ENCODE measurements at regions of chr3 and their contacts with region 1.

Region 1: GRCh38 chr3:112734718-112735350 is 93.9 kb upstream of the CCDC80 start:
- DNase-seq: peak; percentile 16 to 84 (median 52)
- ATAC-seq: peak; percentile 48 to 71 (median 55)
- H3K4me3 ChIP-seq: no peak overlapping the region
- H3K4me3 Mint-ChIP-seq: peak overlapping the region in 1 of 3 donors; percentile 13
- H3K27ac ChIP-seq: no peak overlapping the region
- H3K27ac Mint-ChIP-seq: peak overlapping the region in 1 of 2 donors; percentile 3
- H3K4me1 ChIP-seq: peaks cover 22 to 34% of the 10 kb centered on the region in 2 experiments
- H3K4me1 Mint-ChIP-seq: peaks cover 41 to 44% (median 44%) of the 10 kb centered on the region in 3 donors
- H3K27me3 ChIP-seq: no peaks in the 10 kb centered on the region
- H3K27me3 Mint-ChIP-seq: no peaks in the 10 kb centered on the region

Region 2: DNA sequence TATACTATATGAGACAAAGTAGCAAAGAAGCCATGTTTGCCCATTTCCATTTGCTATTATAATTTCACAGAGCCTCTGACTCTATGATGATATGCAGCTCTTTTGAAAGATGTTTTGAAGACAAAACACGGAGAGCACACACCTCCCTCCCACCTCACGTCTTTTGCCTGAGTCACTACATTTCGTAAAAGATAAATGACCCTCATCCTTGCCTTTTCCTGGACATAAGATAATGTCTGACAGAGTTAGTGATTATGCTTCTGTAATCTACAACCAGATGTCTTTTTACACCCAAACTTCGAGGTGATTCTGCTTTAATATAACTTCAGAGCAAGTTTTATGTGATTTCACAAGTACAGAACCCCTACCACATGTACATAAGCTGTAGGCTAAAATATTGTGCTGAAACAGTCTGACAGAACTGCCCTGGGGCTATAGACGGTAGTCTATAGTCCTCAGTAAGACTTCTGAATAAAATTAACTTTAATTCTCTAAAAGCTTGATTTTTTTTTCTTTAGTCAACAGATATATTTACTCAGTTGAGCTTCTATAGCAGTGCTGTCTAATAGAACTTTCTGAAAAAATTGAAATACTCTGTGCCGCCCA is 11.9 kb after region 1 on chr3:
- CTCF ChIA-PET with region 1: interaction called, 7 to 10 read pairs
- POLR2A ChIA-PET with region 1: no interaction called
- DNase-seq: no peak
- ATAC-seq: no peak
- H3K4me3 ChIP-seq: no peak overlapping the region
- H3K4me3 Mint-ChIP-seq: no peak overlapping the region
- H3K27ac ChIP-seq: no peak overlapping the region
- H3K27ac Mint-ChIP-seq: peak overlapping the region in 1 of 2 donors; percentile 69
- H3K4me1 ChIP-seq: no peaks in the 10 kb centered on the region
- H3K4me1 Mint-ChIP-seq: peaks cover 6 to 36% (median 12%) of the 10 kb centered on the region in 3 donors
- H3K27me3 ChIP-seq: no peaks in the 10 kb centered on the region
- H3K27me3 Mint-ChIP-seq: no peaks in the 10 kb centered on the region

Region 3: DNA sequence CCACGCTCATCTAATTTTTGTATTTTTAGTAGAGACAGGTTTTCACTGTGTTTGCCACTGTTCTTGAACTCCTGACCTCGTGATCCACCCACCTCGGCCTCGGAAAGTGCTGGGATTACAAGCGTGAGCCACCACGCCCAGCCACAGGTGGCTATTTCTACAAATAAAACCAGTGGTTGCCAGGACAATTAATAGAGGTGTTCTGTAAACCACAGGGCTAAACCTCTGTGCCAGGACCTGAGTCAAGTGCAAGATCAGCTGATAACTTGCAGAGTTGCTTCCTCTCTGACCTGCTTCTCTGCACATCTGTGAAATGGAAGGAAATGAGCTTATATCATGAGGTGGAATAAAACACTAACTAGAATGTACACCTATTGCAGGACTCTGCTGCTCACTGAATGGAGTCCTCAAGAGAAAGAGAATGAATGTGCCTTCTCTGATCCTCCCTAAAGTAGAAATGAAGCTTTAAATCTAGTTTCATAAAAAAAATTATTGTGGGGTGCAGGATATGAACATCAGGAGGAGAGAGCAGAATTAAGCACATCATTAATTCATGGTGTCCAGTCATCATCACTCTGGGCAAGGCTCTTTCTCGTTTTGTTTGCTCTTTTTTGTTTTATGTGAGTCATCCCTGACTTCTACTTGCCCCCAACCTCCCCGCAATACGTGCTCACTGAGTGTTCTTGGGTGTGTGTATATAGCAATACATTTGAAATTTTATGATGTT is 39.2 kb after region 1 on chr3:
- CTCF ChIA-PET with region 1: interaction called, 4 to 11 read pairs
- POLR2A ChIA-PET with region 1: no interaction called
- DNase-seq: peak in 18 of 35 experiments; percentile 1 to 46 (median 7)
- ATAC-seq: peak; percentile 55 to 85 (median 74)
- H3K4me3 ChIP-seq: no peak overlapping the region
- H3K4me3 Mint-ChIP-seq: peak overlapping the region in 2 of 3 donors; percentile 17 to 18
- H3K27ac ChIP-seq: peak overlapping the region; percentile 38
- H3K27ac Mint-ChIP-seq: peak overlapping the region; percentile 59 to 88
- H3K4me1 ChIP-seq: peaks cover 5 to 30% of the 10 kb centered on the region in 2 experiments
- H3K4me1 Mint-ChIP-seq: peaks cover 19 to 62% (median 32%) of the 10 kb centered on the region in 3 donors
- H3K27me3 ChIP-seq: no peaks in the 10 kb centered on the region
- H3K27me3 Mint-ChIP-seq: no peaks in the 10 kb centered on the region

Region 4: DNA sequence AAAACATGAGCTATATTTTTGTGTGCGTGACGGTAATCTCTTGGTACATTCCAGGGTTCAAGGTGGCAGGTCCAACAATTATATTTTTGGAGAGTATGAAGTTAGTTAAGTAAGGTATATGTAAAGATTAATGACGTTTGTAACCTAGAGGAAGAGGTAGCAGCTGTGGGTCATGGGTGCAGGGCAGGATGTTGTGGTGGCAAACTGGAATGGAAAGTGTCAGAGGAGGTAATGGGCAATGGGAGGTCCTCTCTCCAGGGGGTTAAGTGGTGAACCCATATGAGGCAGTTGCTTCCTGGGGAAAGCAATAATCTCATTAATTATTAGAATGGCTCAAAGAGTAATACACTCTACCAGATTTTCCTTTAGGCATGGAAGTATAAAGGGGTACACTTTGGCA is 112.9 kb after region 1 on chr3:
- CTCF ChIA-PET with region 1: no interaction called
- POLR2A ChIA-PET with region 1: no interaction called
- DNase-seq: peak in 28 of 35 experiments; percentile 5 to 48 (median 30)
- ATAC-seq: peak in 3 of 4 experiments; percentile 73 to 84 (median 76)
- H3K4me3 ChIP-seq: no peak overlapping the region
- H3K4me3 Mint-ChIP-seq: peak overlapping the region; percentile 1 to 41 (median 31)
- H3K27ac ChIP-seq: peak overlapping the region; percentile 70
- H3K27ac Mint-ChIP-seq: peak overlapping the region; percentile 62 to 83
- H3K4me1 ChIP-seq: peaks cover 2 to 15% of the 10 kb centered on the region in 2 experiments
- H3K4me1 Mint-ChIP-seq: peaks cover 24 to 32% (median 31%) of the 10 kb centered on the region in 3 donors
- H3K27me3 ChIP-seq: no peaks in the 10 kb centered on the region
- H3K27me3 Mint-ChIP-seq: no peaks in the 10 kb centered on the region

Region 5: GRCh38 chr3:112979240-112979832 is 244.5 kb after region 1 on chr3:
- CTCF ChIA-PET with region 1: interaction called, 21 to 68 read pairs
- POLR2A ChIA-PET with region 1: interaction called, 4 to 15 read pairs
- DNase-seq: peak in 6 of 35 experiments; percentile 19 to 76 (median 30)
- ATAC-seq: no peak
- H3K4me3 ChIP-seq: no peak overlapping the region
- H3K4me3 Mint-ChIP-seq: no peak overlapping the region
- H3K27ac ChIP-seq: no peak overlapping the region
- H3K27ac Mint-ChIP-seq: peak overlapping the region in 1 of 2 donors; percentile 8
- H3K4me1 ChIP-seq: peaks cover 31 to 53% of the 10 kb centered on the region in 2 experiments
- H3K4me1 Mint-ChIP-seq: peaks cover 66 to 75% (median 69%) of the 10 kb centered on the region in 3 donors
- H3K27me3 ChIP-seq: no peaks in the 10 kb centered on the region
- H3K27me3 Mint-ChIP-seq: no peaks in the 10 kb centered on the region

Region 6: DNA sequence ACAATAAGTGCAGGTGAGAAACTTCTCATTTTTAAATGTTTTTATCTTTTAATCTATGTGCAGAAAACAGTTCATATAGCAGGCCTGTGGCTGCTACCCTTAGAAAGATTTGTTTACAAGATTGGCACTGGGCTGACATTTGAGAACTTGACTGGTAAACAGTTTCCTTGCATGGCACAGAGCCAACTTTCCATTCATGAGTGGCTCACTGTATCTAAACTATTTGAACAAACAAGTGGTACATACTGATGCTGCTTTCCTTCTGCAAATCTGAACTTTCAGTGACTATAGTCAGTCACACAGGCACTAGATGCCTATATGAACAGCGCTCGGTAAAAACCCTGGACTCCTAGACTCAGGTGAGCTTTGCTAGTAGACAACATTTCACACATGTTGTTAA is 249.7 kb after region 1 on chr3:
- CTCF ChIA-PET with region 1: interaction called, 21 to 68 read pairs
- POLR2A ChIA-PET with region 1: interaction called, 4 to 15 read pairs
- DNase-seq: peak in 8 of 35 experiments; percentile 6 to 65 (median 28)
- ATAC-seq: peak; percentile 42 to 67 (median 61)
- H3K4me3 ChIP-seq: no peak overlapping the region
- H3K4me3 Mint-ChIP-seq: no peak overlapping the region
- H3K27ac ChIP-seq: peak overlapping the region; percentile 15
- H3K27ac Mint-ChIP-seq: peak overlapping the region; percentile 73 to 91
- H3K4me1 ChIP-seq: peaks cover 22 to 32% of the 10 kb centered on the region in 2 experiments
- H3K4me1 Mint-ChIP-seq: peaks cover 43 to 63% (median 61%) of the 10 kb centered on the region in 3 donors
- H3K27me3 ChIP-seq: no peaks in the 10 kb centered on the region
- H3K27me3 Mint-ChIP-seq: no peaks in the 10 kb centered on the region

Region 7: DNA sequence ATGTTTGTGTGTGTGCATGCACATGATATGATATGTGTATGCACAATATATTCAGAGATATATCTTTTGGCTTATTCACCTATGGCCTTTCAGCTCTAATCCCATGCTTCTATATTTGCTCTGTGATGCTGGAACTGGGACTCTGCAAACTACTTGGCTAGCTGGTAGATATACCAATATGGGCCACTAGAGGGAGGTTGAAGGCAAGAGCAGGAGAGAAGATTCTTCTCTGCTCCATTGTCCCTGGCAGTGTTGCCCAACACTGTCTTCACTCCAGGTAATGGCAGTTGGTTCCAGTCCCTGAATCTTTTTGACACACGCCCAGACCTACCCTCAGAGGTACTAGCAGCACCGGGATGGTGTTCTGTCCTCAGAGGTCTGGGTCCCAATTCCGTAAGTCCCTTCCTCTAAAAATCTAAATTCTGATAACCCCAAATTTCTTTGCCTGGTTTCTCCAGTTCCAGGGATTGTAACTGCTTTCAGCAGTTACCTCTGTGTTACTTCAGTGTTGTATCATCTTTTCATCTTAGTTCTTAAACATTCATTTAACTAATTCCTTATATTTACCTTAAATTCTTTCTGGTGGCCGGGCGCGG is 300.7 kb after region 1 on chr3:
- CTCF ChIA-PET with region 1: interaction called, 9 to 17 read pairs
- POLR2A ChIA-PET with region 1: no interaction called
- DNase-seq: peak in 15 of 35 experiments; percentile 4 to 73 (median 23)
- ATAC-seq: peak; percentile 74 to 82 (median 76)
- H3K4me3 ChIP-seq: no peak overlapping the region
- H3K4me3 Mint-ChIP-seq: no peak overlapping the region
- H3K27ac ChIP-seq: no peak overlapping the region
- H3K27ac Mint-ChIP-seq: no peak overlapping the region
- H3K4me1 ChIP-seq: no peaks in the 10 kb centered on the region
- H3K4me1 Mint-ChIP-seq: no peaks in the 10 kb centered on the region
- H3K27me3 ChIP-seq: no peaks in the 10 kb centered on the region
- H3K27me3 Mint-ChIP-seq: no peaks in the 10 kb centered on the region

Measured in T-cell (primary cell).